Mammary epithelial cell (primary cell): ENCODE measurements at regions of chr7 and their contacts with region 1.

Region 1: GRCh38 chr7:118696879-118697278 is 472.4 kb downstream of the ANKRD7 start:
- DNase-seq: no peak
- H3K4me3 ChIP-seq: no peak overlapping the region
- H3K27ac ChIP-seq: no peak overlapping the region
- H3K4me1 ChIP-seq: no peaks in the 10 kb centered on the region
- H3K27me3 ChIP-seq: peaks cover 5% of the 10 kb centered on the region
- CTCF ChIP-seq: no peak

Region 2: DNA sequence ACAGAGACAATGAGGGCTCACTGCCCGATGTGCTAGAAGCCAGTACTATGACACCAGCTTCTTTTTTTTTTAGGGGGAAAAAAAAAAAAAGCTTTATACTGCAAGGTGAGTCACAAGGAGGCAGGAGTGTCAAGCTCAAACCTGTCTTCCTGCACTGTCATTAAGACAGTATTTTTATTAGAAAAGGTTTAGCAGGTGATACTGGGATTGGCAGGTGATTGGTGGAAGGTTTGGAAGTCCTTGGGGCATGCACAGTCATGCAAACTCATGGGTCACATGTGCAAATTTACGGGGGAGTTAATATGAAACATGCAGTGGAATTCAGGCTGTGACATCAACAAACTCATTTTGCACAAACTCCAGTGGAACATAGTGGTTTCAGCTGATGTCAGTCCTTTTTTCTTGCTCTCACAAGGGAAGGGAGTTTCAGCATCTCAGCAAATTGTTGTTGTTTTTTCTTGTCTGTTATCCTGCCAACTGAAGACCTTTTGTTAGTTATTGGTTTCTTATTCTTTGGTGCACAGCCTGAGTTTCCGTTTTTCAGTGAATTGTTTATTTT is 58.3 kb after region 1 on chr7:
- CTCF ChIA-PET with region 1: no interaction called
- dilution Hi-C with region 1: no loop called
- in situ Hi-C with region 1: no loop called
- intact Hi-C with region 1: no loop called
- DNase-seq: peak; percentile 99
- H3K4me3 ChIP-seq: no peak overlapping the region
- H3K27ac ChIP-seq: peak overlapping the region; percentile 88
- H3K4me1 ChIP-seq: peaks cover 7% of the 10 kb centered on the region
- H3K27me3 ChIP-seq: no peaks in the 10 kb centered on the region
- CTCF ChIP-seq: no peak

Region 3: GRCh38 chr7:118802736-118803135 is 105.9 kb after region 1 on chr7:
- CTCF ChIA-PET with region 1: no interaction called
- dilution Hi-C with region 1: no loop called
- in situ Hi-C with region 1: loop called in 1 of 2 experiments (anchors 25 kb)
- intact Hi-C with region 1: no loop called
- DNase-seq: no peak
- H3K4me3 ChIP-seq: no peak overlapping the region
- H3K27ac ChIP-seq: no peak overlapping the region
- H3K4me1 ChIP-seq: no peaks in the 10 kb centered on the region
- H3K27me3 ChIP-seq: peaks cover 2% of the 10 kb centered on the region
- CTCF ChIP-seq: no peak